ENCODE measurements at regions of chr17 and their contacts with region 1.

Region 1: DNA sequence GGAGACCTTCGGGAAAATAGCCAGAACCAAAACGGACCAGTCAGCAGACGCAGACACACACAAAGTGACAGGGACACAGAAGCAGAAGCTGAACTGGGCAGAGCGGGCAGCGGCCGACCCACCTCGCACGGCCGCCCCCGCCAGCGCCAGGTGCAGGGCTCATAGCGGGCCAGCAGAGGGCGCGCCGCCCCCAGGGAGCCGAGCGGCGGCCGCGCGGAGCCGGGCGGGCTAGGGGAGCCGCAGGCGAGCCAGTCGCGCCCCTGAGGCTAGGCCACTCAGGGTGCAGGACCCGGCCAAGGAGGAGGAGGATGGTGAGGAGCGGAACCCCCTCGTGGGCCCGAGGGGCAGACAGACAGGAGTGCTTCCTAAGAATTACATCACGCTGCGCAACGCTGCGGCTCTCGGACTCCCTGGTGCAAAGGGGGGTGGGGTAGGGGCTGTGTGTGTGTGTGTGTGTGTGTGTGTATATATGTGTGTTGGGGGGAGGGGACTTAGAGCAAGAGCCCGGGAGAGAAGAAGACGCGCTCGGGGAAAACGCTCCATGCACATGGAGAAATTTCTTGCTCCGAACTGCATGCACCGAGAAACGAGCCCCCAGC is 913 bp upstream of the NOG start:
- DNase-seq: no peak
- H3K4me3 ChIP-seq: peak overlapping the region; percentile 63 to 70 (median 66)
- H3K27ac ChIP-seq: peak overlapping the region in 2 of 4 donors; percentile 81 to 84
- H3K4me1 ChIP-seq: peaks cover 43 to 56% (median 55%) of the 10 kb centered on the region in 4 donors
- H3K27me3 ChIP-seq: peaks cover 0 to 59% (median 19%) of the 10 kb centered on the region in 4 donors
- CTCF ChIP-seq: peak in 2 of 3 experiments; percentile 94 to 99
- EP300 ChIP-seq: no peak
- POLR2A ChIP-seq: no peak

Region 2: GRCh38 chr17:56679115-56679766 is 86.7 kb after region 1 on chr17:
- intact Hi-C with region 1: loop called (anchors 10 kb)
- DNase-seq: no peak
- H3K4me3 ChIP-seq: peak overlapping the region; percentile 37 to 52 (median 41)
- H3K27ac ChIP-seq: no peak overlapping the region
- H3K4me1 ChIP-seq: peaks cover 7 to 14% (median 12%) of the 10 kb centered on the region in 4 donors
- H3K27me3 ChIP-seq: peaks cover 0 to 55% (median 2%) of the 10 kb centered on the region in 4 donors
- CTCF ChIP-seq: peak; percentile 42 to 64 (median 53)
- EP300 ChIP-seq: no peak
- POLR2A ChIP-seq: no peak

Region 3: DNA sequence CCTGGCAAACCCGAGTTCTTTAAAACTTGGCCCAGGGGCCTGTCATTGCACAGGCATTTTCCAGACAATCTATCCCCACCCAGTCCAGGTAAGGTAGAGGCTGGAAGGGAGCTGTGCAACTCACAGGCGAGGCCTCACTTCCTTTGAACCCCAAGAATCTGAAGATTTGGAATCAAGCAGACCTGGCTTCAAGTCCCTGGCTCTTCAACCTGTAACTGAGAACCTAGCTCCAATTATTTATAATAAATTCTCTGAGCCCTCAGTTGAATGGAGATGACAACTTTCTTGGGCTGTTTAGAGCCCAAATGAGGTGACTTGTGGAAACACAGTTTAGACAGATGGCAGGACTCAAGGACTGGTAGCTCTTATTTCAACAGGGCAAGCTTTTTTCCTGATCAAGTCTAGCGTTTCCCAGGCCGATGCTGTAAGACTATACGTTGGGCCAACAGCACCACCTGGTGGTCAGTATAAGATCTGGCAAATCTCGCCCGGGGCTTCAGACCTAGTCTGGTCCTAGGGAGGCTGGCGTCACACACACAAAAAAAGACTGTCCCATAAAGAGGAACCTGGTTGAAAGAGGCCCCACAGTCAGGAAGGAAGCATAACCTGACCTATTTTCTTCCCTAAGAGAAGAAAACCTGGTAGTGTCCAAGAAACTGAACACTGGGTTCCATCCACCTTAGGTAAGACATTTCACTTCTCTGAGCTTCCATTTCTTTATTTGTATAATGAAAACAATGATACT is 123.2 kb after region 1 on chr17:
- intact Hi-C with region 1: loop called (anchors 1 kb)
- DNase-seq: peak; percentile 95
- H3K4me3 ChIP-seq: no peak overlapping the region
- H3K27ac ChIP-seq: no peak overlapping the region
- H3K4me1 ChIP-seq: no peaks in the 10 kb centered on the region
- H3K27me3 ChIP-seq: peaks cover 0 to 7% (median 2%) of the 10 kb centered on the region in 4 donors
- CTCF ChIP-seq: peak; percentile 83 to 85 (median 83)
- EP300 ChIP-seq: no peak
- POLR2A ChIP-seq: no peak

Region 4: GRCh38 chr17:56779898-56780733 is 187.5 kb after region 1 on chr17:
- intact Hi-C with region 1: loop called (anchors 5 kb)
- DNase-seq: peak; percentile 93
- H3K4me3 ChIP-seq: peak overlapping the region; percentile 32 to 53 (median 33)
- H3K27ac ChIP-seq: no peak overlapping the region
- H3K4me1 ChIP-seq: peaks cover 6 to 12% (median 9%) of the 10 kb centered on the region in 4 donors
- H3K27me3 ChIP-seq: peaks cover 0 to 23% (median 0%) of the 10 kb centered on the region in 4 donors
- CTCF ChIP-seq: peak in 2 of 3 experiments; percentile 92 to 96
- EP300 ChIP-seq: no peak
- POLR2A ChIP-seq: no peak